ENCODE measurements at regions of chr14 and their contacts with region 1.

Region 1: GRCh38 chr14:95248432-95248831 is 71.3 kb downstream of the CLMN start:
- DNase-seq: no peak
- H3K4me3 Mint-ChIP-seq: peak overlapping the region; percentile 49
- H3K27ac Mint-ChIP-seq: peak overlapping the region; percentile 77
- H3K4me1 Mint-ChIP-seq: peaks cover 55% of the 10 kb centered on the region
- H3K27me3 Mint-ChIP-seq: no peaks in the 10 kb centered on the region
- CTCF ChIP-seq: no peak

Region 2: DNA sequence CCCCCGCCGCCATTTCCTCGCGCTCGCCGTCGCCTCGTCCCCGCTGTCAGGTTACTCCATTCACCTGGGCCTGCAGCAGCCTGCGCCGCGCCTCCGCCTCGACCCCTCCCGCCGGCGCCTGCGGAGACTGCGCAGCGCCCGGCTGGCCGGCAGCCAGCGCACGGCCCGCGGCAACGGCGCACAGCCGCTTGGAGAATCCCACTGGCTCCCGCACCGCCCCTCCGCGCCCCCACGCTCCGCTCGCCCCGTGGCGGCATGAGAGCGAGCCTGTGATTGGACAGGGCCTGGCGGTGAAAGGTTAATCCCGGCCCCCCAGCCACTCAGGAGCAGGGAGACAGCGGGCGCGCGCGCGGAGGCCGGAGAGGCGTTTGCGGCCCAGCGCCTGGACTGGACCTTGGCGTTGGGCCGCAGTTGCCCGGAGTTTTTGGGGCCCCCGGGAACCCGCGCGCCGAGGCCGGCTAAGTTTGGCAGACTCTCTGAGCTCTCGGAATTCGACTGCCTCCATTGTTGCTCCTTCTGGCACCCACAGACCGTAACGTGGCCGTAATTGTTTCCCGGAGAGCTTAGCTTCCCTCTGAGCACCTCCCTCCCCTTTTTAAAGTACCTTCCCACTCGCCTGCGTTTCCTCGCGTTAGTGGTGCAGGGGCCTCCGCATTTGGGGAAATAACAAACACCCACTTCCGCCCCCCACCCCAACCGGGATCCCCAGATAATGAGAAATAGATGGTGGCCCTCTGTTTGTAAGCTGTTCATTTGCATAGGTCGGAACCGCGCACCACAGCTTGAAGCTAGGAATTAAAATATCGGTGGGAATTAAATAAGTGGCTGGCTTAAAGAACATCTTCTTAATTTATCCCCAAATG is 90.9 kb before region 1 on chr14 and contains the start of gene DICER1:
- CTCF ChIA-PET with region 1: no interaction called
- intact Hi-C with region 1: loop called (anchors 5 kb)
- DNase-seq: peak; percentile 98
- H3K4me3 Mint-ChIP-seq: peak within 1 kb of the TSS; percentile 84
- H3K27ac Mint-ChIP-seq: peak within 1 kb of the TSS; percentile 91
- H3K4me1 Mint-ChIP-seq: peaks cover 19% of the 10 kb centered on the region
- H3K27me3 Mint-ChIP-seq: no peaks in the 10 kb centered on the region
- CTCF ChIP-seq: no peak
- total RNA-seq, gene DICER1: 53.8 and 58.7 TPM in 2 replicates

Region 3: DNA sequence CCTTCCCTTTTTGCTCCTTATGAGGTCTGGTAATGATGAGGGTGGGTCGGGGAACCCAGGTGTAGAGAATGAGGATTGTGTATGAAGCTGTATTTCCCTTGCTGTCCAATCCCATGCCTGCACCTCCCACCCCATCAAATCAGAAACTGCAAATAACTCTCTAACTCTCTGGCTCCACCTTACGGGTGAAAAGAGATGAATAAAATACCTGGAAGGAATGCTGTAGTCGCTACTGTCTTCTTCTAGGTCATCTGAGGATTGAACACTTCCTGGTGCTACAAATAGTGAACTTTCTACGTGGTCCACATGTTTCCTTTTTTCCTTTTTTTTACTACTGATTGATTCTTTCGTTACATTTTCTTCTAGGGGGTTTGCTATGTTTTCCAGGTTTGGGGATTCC is 52.1 kb before region 1 on chr14:
- CTCF ChIA-PET with region 1: no interaction called
- intact Hi-C with region 1: loop called (anchors 5 kb)
- DNase-seq: no peak
- H3K4me3 Mint-ChIP-seq: no peak overlapping the region
- H3K27ac Mint-ChIP-seq: no peak overlapping the region
- H3K4me1 Mint-ChIP-seq: peaks cover 15% of the 10 kb centered on the region
- H3K27me3 Mint-ChIP-seq: no peaks in the 10 kb centered on the region
- CTCF ChIP-seq: no peak

Region 4: GRCh38 chr14:95265106-95266094 is 17.0 kb after region 1 on chr14:
- CTCF ChIA-PET with region 1: no interaction called
- intact Hi-C with region 1: loop called (anchors 1 kb)
- DNase-seq: peak; percentile 84
- H3K4me3 Mint-ChIP-seq: peak overlapping the region; percentile 51
- H3K27ac Mint-ChIP-seq: peak overlapping the region; percentile 96
- H3K4me1 Mint-ChIP-seq: peaks cover 43% of the 10 kb centered on the region
- H3K27me3 Mint-ChIP-seq: no peaks in the 10 kb centered on the region
- CTCF ChIP-seq: no peak

Region 5: GRCh38 chr14:95319312-95320021 is 71.0 kb after region 1 on chr14 and contains the start of gene CLMN:
- CTCF ChIA-PET with region 1: no interaction called
- intact Hi-C with region 1: loop called (anchors 5 kb)
- DNase-seq: peak; percentile 64
- H3K4me3 Mint-ChIP-seq: peak within 1 kb of the TSS; percentile 97
- H3K27ac Mint-ChIP-seq: peak within 1 kb of the TSS; percentile 87
- H3K4me1 Mint-ChIP-seq: peaks cover 63% of the 10 kb centered on the region
- H3K27me3 Mint-ChIP-seq: no peaks in the 10 kb centered on the region
- CTCF ChIP-seq: no peak
- total RNA-seq, gene CLMN: 104 and 111 TPM in 2 replicates